Left ventricle myocardium inferior (tissue), 1 donor: ENCODE measurements at regions of chr19 and their contacts with region 1.

Region 1: DNA sequence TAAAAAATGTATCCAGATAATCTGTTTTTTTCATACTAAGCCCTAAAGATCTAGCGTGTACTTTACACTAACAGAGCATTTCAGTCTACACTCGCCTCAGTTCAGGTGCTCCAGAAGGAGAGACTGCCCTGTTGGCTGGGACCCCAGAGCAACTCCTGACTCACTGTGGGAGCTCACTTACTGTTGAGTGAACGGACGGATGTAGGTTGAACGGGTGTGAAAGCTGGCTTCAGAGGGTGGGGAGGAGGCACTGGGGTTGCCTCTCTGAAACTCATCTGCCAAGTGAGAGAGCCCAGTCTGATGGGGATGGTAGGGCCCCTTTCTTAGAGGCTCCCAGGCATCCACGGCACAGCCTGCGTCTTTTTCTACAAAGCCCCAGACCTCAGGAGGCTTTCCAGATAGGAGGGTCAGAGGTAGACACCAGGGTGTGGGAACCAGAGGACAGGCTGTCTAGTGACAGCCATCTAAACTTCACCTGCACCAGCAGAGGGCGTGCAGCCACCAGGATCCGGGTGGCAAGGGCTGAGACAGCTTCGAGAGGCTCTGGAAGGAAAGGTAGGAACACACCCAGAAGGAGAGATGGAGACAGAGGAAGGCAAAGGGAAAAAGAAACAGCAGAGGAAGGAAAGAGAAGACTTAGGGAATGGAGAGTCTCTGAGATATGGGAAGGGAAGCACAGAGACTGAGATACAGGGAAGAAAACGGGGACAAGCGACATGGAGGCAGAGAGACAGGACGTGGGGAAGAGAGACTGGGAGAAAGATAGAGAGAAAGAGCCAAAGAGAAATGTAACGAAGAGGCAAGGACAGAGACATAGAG is 3.7 kb downstream of the KASH5 start:
- DNase-seq: peak; percentile 77
- H3K4me3 ChIP-seq: no peak overlapping the region
- H3K27ac ChIP-seq: no peak overlapping the region
- H3K4me1 ChIP-seq: no peaks in the 10 kb centered on the region
- H3K27me3 ChIP-seq: peaks cover 86% of the 10 kb centered on the region
- CTCF ChIP-seq: peak; percentile 87

Region 2: DNA sequence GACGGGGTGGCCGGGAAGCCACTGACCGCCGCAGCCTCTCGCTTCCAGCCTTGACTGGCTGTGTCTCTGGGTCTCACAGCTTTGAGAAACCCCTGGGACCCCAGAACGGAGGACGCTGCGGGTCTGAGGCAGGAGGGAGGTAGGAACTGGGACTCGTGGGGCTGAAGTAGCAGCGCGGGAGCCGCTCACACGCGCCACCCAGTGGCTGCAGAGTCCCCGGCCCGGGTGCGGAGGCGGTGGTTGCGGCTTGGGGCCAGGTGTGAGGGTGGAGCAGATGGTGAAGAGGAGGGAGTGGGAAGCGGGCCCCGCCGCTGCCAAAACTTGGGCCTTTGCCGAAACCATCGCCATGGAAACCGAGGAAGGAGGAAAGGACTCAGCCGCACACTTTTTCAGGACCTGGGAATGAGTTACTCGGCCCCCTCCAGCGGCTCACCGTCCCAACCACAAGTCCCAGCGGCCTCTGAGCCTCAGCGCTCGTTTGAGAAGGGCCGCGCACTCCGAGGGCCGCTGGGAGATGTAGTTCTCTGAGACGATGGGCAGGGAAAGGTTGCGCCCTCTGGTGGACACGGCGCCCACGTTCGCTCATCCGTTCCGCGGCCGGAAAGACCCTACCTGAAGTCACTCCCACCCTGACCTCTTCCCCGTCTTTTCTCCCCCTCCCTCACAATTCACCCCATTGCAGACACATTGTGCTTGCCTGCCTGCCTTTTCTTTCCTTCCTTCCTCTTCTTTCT is 51.7 kb after region 1 on chr19:
- intact Hi-C with region 1: loop called (anchors 10 kb)
- DNase-seq: peak; percentile 95
- H3K4me3 ChIP-seq: peak overlapping the region; percentile 83
- H3K27ac ChIP-seq: peak overlapping the region; percentile 95
- H3K4me1 ChIP-seq: peaks cover 33% of the 10 kb centered on the region
- H3K27me3 ChIP-seq: peaks cover 40% of the 10 kb centered on the region
- CTCF ChIP-seq: peak; percentile 85